ENCODE measurements at regions of chr17 and their contacts with region 1.

Region 1: DNA sequence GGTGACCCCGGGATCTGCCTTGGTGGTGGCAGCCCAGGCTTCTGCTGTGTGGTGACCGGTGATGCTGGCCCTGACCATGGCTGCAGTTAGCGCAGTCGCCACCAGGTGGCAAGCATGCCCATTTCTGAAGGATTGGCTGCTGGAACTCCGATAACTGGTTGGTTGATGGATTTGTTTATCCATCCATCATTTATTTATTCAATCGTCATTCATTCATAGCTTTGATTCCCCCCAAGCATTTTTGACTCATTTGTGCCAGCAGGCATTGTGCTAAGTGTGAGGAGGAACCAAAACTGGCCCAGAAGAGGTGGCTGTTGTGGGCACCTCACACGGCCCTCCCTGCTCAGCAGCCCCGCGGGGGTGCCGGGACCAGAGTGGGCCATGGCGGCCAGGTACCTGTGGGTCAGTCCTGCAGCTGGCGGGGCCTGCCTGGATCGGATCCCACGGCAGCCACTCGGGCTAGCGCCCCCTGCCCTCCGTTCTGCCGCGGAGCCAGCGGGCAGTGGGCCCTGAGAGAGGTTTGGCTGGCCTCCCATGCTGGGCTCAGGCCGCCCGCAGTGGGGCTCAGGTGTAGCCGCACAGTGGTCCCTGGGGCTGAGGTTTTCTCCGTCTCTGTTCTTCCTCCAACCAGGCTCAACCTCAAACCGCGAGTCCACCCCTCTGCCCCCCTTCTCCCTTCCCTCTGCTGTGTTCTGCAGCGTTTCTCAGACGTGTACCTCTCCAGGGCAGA is 28.8 kb upstream of the ITGA3 start:
- DNase-seq: no peak
- H3K4me3 ChIP-seq: peak overlapping the region; percentile 17 to 44
- H3K27ac ChIP-seq: peak overlapping the region; percentile 25
- H3K4me1 ChIP-seq: peaks cover 18% of the 10 kb centered on the region
- H3K27me3 ChIP-seq: no peaks in the 10 kb centered on the region
- CTCF ChIP-seq: peak; percentile 84 to 96 (median 94)
- POLR2A ChIP-seq: no peak

Region 2: GRCh38 chr17:48954300-48954755 is 1072.7 kb before region 1 on chr17:
- intact Hi-C with region 1: no loop called
- DNase-seq: no peak
- H3K4me3 ChIP-seq: no peak overlapping the region
- H3K27ac ChIP-seq: no peak overlapping the region
- H3K4me1 ChIP-seq: no peaks in the 10 kb centered on the region
- H3K27me3 ChIP-seq: no peaks in the 10 kb centered on the region
- CTCF ChIP-seq: no peak
- POLR2A ChIP-seq: no peak

Region 3: GRCh38 chr17:49925921-49926320 is 101.1 kb before region 1 on chr17:
- intact Hi-C with region 1: no loop called
- DNase-seq: no peak
- H3K4me3 ChIP-seq: no peak overlapping the region
- H3K27ac ChIP-seq: no peak overlapping the region
- H3K4me1 ChIP-seq: peaks cover 6% of the 10 kb centered on the region
- H3K27me3 ChIP-seq: no peaks in the 10 kb centered on the region
- CTCF ChIP-seq: no peak
- POLR2A ChIP-seq: no peak

Region 4: GRCh38 chr17:50090971-50091917 is 64.2 kb after region 1 on chr17:
- intact Hi-C with region 1: loop called (anchors 2 kb)
- DNase-seq: no peak
- H3K4me3 ChIP-seq: no peak overlapping the region
- H3K27ac ChIP-seq: no peak overlapping the region
- H3K4me1 ChIP-seq: peaks cover 11% of the 10 kb centered on the region
- H3K27me3 ChIP-seq: no peaks in the 10 kb centered on the region
- CTCF ChIP-seq: no peak
- POLR2A ChIP-seq: no peak

Region 5: GRCh38 chr17:50304781-50305404 is 277.8 kb after region 1 on chr17:
- intact Hi-C with region 1: loop called (anchors 10 kb)
- DNase-seq: no peak
- H3K4me3 ChIP-seq: no peak overlapping the region
- H3K27ac ChIP-seq: no peak overlapping the region
- H3K4me1 ChIP-seq: no peaks in the 10 kb centered on the region
- H3K27me3 ChIP-seq: no peaks in the 10 kb centered on the region
- CTCF ChIP-seq: no peak
- POLR2A ChIP-seq: no peak

Measured in vagina (tissue), 2 donors.